Mucosa of descending colon (tissue), 3 donors: ENCODE measurements at regions of chr20 and their contacts with region 1.

Region 1: GRCh38 chr20:31822421-31823330 is 3.5 kb downstream of the MYLK2 start:
- DNase-seq: peak; percentile 74 to 80 (median 75)
- ATAC-seq: peak; percentile 89
- H3K4me3 ChIP-seq: no peak overlapping the region
- H3K4me1 ChIP-seq: no peaks in the 10 kb centered on the region
- CTCF ChIP-seq: peak; percentile 98

Region 2: GRCh38 chr20:31381766-31382165 is 440.9 kb before region 1 on chr20:
- intact Hi-C with region 1: no loop called
- DNase-seq: no peak
- ATAC-seq: no peak
- H3K4me3 ChIP-seq: no peak overlapping the region
- H3K4me1 ChIP-seq: no peaks in the 10 kb centered on the region
- CTCF ChIP-seq: no peak

Region 3: GRCh38 chr20:31934968-31935764 is 112.5 kb after region 1 on chr20:
- intact Hi-C with region 1: no loop called
- DNase-seq: no peak
- ATAC-seq: no peak
- H3K4me3 ChIP-seq: no peak overlapping the region
- H3K4me1 ChIP-seq: no peaks in the 10 kb centered on the region
- CTCF ChIP-seq: no peak

Region 4: GRCh38 chr20:32034581-32035425 is 212.1 kb after region 1 on chr20:
- intact Hi-C with region 1: loop called in 1 of 2 experiments (anchors 5 kb)
- DNase-seq: no peak
- ATAC-seq: peak; percentile 13
- H3K4me3 ChIP-seq: no peak overlapping the region
- H3K4me1 ChIP-seq: peaks cover 3% of the 10 kb centered on the region
- CTCF ChIP-seq: no peak